Activated CD4-positive, alpha-beta memory T cell treated with anti-CD3 and anti-CD28 coated beads for 36 hours (primary cell): ENCODE measurements at regions of chr1 and their contacts with region 1.

Region 1: GRCh38 chr1:27365372-27366112 is 1.2 kb downstream of the MAP3K6 start:
- DNase-seq: peak; percentile 92
- H3K4me3 Mint-ChIP-seq: peak overlapping the region; percentile 85
- H3K27ac Mint-ChIP-seq: peak overlapping the region; percentile 66
- H3K4me1 Mint-ChIP-seq: peaks cover 18% of the 10 kb centered on the region
- H3K27me3 Mint-ChIP-seq: no peaks in the 10 kb centered on the region

Region 2: GRCh38 chr1:26999440-26999987 is 366.0 kb before region 1 on chr1:
- CTCF ChIA-PET with region 1: no interaction called
- POLR2A ChIA-PET with region 1: no interaction called
- intact Hi-C with region 1: no loop called
- DNase-seq: no peak
- H3K4me3 Mint-ChIP-seq: no peak overlapping the region
- H3K27ac Mint-ChIP-seq: no peak overlapping the region
- H3K4me1 Mint-ChIP-seq: peaks cover 4% of the 10 kb centered on the region
- H3K27me3 Mint-ChIP-seq: peaks cover 28% of the 10 kb centered on the region

Region 3: DNA sequence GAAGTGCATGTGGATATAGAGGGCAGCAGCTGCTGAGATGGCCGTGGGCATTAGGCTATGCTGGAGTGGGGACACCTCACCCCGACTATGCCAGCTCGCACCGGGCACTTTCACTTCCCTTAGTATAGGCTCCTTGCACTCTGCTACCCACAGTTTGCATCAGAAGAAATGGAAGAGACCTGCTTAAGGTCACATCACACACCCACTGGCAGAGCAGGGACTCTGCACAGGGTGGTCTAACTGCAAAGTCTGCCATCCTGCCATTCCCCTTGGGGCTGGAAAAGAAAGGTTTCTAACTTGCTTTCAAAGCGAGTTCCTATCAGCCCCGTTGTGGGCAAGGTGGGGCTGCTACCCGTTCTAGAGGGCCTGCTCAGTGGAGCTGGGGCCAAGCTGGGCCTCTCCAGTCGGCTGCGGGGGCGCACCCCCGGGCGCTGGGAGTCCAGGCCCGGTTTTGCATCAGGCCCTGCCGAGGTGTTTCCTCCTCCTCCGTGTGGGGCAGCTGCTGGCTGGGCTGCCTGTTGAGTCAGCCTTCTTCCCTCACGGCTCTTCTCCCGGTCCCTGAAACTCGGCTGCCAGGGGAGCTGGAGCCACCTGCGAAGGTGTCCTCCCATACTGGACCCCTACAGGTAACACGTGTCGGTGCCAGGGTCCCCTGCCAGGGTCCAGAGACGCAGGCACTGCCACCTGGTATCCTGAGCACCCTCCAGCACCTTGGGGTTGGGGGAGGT is 23.9 kb before region 1 on chr1 and contains the start of gene SYTL1:
- CTCF ChIA-PET with region 1: interaction called, 5 read pairs
- POLR2A ChIA-PET with region 1: interaction called, 5 read pairs
- intact Hi-C with region 1: loop called (anchors 2 kb)
- DNase-seq: peak; percentile 80
- H3K4me3 Mint-ChIP-seq: peak within 1 kb of the TSS; percentile 84
- H3K27ac Mint-ChIP-seq: peak within 1 kb of the TSS; percentile 92
- H3K4me1 Mint-ChIP-seq: peaks cover 51% of the 10 kb centered on the region
- H3K27me3 Mint-ChIP-seq: no peaks in the 10 kb centered on the region
- total RNA-seq, gene SYTL1: 27.3 to 30.4 TPM

Region 4: GRCh38 chr1:27392096-27392777 is 26.7 kb after region 1 on chr1 and contains the start of gene GPR3:
- CTCF ChIA-PET with region 1: interaction called, 26 read pairs
- POLR2A ChIA-PET with region 1: interaction called, 3 read pairs
- intact Hi-C with region 1: loop called (anchors 1 kb)
- DNase-seq: peak; percentile 96
- H3K4me3 Mint-ChIP-seq: peak within 1 kb of the TSS; percentile 78
- H3K27ac Mint-ChIP-seq: peak within 1 kb of the TSS; percentile 63
- H3K4me1 Mint-ChIP-seq: peaks cover 13% of the 10 kb centered on the region
- H3K27me3 Mint-ChIP-seq: no peaks in the 10 kb centered on the region
- total RNA-seq, gene GPR3: 1.3 to 1.5 TPM

Region 5: GRCh38 chr1:27402349-27402754 is 36.8 kb after region 1 on chr1:
- CTCF ChIA-PET with region 1: no interaction called
- POLR2A ChIA-PET with region 1: no interaction called
- intact Hi-C with region 1: no loop called
- DNase-seq: peak; percentile 43
- H3K4me3 Mint-ChIP-seq: no peak overlapping the region
- H3K27ac Mint-ChIP-seq: peak overlapping the region; percentile 33
- H3K4me1 Mint-ChIP-seq: peaks cover 7% of the 10 kb centered on the region
- H3K27me3 Mint-ChIP-seq: no peaks in the 10 kb centered on the region